ENCODE measurements at regions of chr2 and their contacts with region 1.

Region 1: DNA sequence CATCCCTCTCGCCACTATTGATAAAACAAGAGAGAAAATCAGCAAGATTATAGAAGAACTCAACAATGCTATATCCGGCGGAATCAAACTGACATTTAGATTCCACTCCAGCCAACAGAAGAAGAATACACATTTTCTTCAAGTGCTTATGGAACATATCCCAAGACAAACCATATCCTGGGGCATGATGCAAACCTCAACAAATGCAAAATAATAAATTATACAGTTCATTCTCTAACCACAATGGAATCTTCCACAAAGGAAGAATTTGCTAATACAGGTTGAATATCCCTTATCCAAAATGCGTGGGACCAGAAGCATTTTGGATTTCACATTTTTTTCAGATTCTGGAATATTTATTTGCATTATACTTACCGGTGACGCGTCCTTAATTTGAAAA is 51.4 kb upstream of the YPEL5 start:
- DNase-seq: no peak
- H3K4me3 ChIP-seq: no peak overlapping the region
- H3K27ac ChIP-seq: no peak overlapping the region
- H3K4me1 ChIP-seq: peaks cover 0 to 4% (median 0%) of the 10 kb centered on the region in 6 donors
- H3K27me3 ChIP-seq: peaks cover 0 to 30% (median 4%) of the 10 kb centered on the region in 7 donors
- CTCF ChIP-seq: no peak
- POLR2A ChIP-seq: no peak

Region 2: GRCh38 chr2:28566521-28567041 is 1528.8 kb before region 1 on chr2:
- intact Hi-C with region 1: no loop called
- DNase-seq: peak; percentile 98
- H3K4me3 ChIP-seq: peak overlapping the region; percentile 33 to 66 (median 52)
- H3K27ac ChIP-seq: peak overlapping the region in 6 of 8 donors; percentile 37 to 81 (median 71)
- H3K4me1 ChIP-seq: peaks cover 0 to 22% (median 11%) of the 10 kb centered on the region in 6 donors
- H3K27me3 ChIP-seq: no peaks in the 10 kb centered on the region
- CTCF ChIP-seq: peak; percentile 98 to 100 (median 100)
- POLR2A ChIP-seq: no peak

Region 3: DNA sequence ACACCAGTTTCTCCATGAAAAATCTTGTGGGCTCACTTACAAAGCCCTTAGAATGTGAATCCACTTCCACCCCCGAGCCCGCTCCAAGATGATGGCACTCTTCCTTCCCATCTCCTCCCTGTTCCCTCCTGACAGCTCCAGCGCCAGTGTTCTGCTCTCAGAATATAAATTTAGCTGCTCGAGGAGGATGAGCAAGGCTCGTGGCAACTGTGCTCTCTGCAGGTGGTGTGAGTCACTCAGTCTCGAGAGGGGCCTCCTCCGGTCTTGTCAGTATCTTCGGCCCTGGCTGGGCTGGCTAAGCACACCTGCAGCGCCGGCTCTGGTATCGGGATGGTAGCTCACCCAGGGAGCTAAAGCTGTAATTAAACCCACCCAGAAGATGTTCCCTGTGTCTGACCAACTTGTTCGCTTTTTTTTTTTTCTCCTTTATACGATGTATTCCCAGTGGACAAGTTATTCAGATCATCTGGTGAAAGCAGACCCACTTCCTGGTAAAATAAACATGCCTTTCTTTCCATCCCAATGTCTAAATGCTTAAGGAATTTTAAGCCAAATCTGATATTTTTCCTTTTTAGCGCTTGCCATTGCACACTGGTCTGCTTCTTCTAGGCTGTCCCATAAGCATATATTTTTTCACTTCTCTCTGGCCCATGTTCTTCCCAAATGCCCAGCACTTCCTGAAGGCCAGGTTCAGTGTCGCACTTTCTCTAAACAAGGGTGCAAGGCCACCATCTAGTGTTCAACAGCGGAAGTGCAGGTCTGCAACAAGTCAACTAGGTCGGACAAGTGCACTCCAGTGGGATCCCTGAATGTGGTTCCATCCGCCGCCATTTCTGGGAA is 20.0 kb after region 1 on chr2:
- intact Hi-C with region 1: loop called (anchors 2 kb)
- DNase-seq: peak; percentile 78
- H3K4me3 ChIP-seq: no peak overlapping the region
- H3K27ac ChIP-seq: no peak overlapping the region
- H3K4me1 ChIP-seq: peaks cover 0 to 7% (median 3%) of the 10 kb centered on the region in 6 donors
- H3K27me3 ChIP-seq: no peaks in the 10 kb centered on the region
- CTCF ChIP-seq: peak; percentile 46 to 87 (median 81)
- POLR2A ChIP-seq: no peak

Measured in spleen (tissue), 13 donors.